ENCODE measurements at regions of chr3 and their contacts with region 1.

Region 1: DNA sequence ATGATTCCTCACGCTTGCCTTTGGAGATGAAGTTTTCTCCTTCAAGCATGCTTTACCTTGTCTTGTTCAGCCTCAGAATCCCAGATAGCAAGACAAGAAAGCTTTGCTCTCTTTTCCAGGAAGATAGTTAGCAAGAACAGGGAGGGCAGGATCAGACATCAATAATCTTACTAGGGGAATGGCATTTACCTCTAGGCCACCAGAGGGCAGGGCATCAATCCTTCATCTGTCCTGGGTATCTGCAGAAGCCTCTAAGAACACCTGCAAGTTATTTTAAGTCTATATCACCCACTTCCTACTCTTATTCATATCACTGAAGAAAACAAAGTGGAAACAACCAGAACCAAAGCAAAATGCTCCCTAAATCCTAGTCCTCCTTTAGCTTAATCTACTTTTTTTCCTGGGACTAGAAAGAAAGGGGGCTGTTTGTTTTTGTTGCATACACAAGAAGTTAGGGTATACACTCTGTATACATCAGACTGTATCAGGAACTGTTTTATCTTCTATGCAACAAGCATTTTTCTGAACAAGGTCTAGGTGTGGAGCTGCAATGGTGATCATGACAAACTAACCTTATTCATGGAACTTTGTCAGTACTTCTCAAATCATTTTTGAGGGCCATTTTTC is 862.5 kb downstream of the CADM2 start:
- H3K4me3 ChIP-seq: no peak overlapping the region
- H3K27ac ChIP-seq: no peak overlapping the region
- H3K4me1 ChIP-seq: no peaks in the 10 kb centered on the region
- CTCF ChIP-seq: no peak

Region 2: DNA sequence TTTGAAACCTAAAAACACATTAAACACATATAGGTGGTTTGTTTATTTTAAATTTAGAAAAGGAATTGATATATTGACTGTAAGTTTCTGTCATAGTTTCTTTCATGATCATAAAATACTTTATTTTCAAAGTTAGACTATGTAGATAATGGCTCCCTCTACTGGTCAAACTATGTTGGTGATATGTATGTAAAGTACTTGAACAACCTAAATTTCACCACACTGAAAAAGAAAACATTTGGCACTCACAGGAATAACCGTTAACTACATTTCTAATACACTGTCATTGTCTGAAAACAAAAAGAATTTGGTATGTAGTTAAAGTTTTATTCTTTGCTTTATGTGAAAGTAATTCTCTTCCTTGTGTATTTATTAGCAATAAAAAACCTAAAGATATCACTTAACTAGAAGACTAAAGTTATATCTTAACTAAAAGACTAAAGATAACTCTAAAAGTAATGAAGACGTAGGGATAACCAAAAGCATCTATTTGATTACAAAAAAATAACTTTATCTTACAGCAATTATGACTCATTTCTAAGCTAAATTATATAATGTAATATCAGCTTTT is 742.2 kb after region 1 on chr3:
- CTCF ChIA-PET with region 1: interaction called, 10 read pairs
- POLR2A ChIA-PET with region 1: no interaction called
- H3K4me3 ChIP-seq: no peak overlapping the region
- H3K27ac ChIP-seq: no peak overlapping the region
- H3K4me1 ChIP-seq: no peaks in the 10 kb centered on the region
- CTCF ChIP-seq: no peak